ENCODE measurements at regions of chr18 and their contacts with region 1.

Region 1: DNA sequence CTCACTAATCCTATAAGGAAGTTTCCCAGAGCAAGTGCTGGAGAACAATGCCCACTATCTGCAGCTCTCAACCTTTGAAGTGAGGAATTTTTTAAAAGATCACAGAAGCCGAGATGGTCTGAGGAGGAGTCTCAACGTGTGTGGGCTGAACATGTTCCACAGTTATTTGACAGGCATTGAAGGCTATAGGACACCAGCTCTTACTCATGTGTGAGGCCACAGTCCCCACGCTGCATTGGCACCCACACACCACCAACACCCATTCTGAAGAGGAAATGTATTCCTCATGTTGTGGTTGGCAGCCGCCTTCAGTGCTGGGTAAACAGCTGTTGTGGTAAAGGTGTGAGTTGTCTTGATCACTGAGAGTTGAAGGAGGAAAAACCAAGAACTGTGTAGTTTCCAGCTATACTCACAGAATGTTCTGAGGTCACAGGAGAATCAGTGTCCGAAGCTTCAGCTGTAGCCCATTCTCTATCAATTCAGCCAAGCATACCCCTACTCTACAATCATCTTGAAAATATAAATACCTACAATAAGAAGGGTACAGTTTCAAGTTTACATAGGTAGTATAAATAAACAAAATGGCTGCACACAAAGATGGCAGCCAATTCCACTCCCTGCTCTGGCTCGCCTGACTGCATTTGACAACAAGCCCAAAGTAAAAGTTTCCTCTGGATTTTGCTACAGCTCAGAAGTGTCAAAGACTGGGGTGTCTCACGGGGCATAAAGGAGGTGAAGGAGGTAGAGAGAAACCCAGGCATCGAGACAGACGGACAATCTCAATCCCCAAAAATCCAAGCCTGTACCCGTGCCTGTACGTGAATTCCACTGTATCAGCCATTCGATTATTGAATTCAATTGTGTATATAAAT is 12.1 kb downstream of the CD226 start:
- DNase-seq: peak; percentile 30 to 87 (median 77)
- ATAC-seq: peak; percentile 96 to 97
- H3K4me3 Mint-ChIP-seq: no peak overlapping the region
- H3K27ac Mint-ChIP-seq: no peak overlapping the region
- H3K4me1 Mint-ChIP-seq: peaks cover 17 to 44% (median 27%) of the 10 kb centered on the region in 4 donors
- H3K27me3 Mint-ChIP-seq: no peaks in the 10 kb centered on the region

Region 2: GRCh38 chr18:69898241-69898861 is 37.2 kb before region 1 on chr18:
- POLR2A ChIA-PET with region 1: interaction called, 18 read pairs
- DNase-seq: peak in 4 of 10 donors; percentile 17 to 31 (median 23)
- ATAC-seq: peak; percentile 61 to 62
- H3K4me3 Mint-ChIP-seq: peak overlapping the region; percentile 80 to 91 (median 85)
- H3K27ac Mint-ChIP-seq: peak overlapping the region; percentile 79 to 95 (median 91)
- H3K4me1 Mint-ChIP-seq: peaks cover 37 to 68% (median 56%) of the 10 kb centered on the region in 4 donors
- H3K27me3 Mint-ChIP-seq: no peaks in the 10 kb centered on the region

Region 3: GRCh38 chr18:69947361-69948133 is 12.0 kb after region 1 on chr18 and contains the start of gene CD226:
- POLR2A ChIA-PET with region 1: interaction called, 33 read pairs
- DNase-seq: peak in 4 of 10 donors; percentile 14 to 60 (median 52)
- ATAC-seq: peak; percentile 72 to 81
- H3K4me3 Mint-ChIP-seq: peak within 1 kb of the TSS in 6 of 10 donors; percentile 78 to 90 (median 86)
- H3K27ac Mint-ChIP-seq: peak within 1 kb of the TSS in 3 of 10 donors; percentile 91 to 94 (median 93)
- H3K4me1 Mint-ChIP-seq: peaks cover 0 to 55% (median 22%) of the 10 kb centered on the region in 4 donors
- H3K27me3 Mint-ChIP-seq: no peaks in the 10 kb centered on the region
- polyA plus RNA-seq, gene CD226: 13.0 to 26.4 (median 15.6) TPM

Measured in naive thymus-derived CD8-positive, alpha-beta T cell (primary cell).